GM10248 (cell line): ENCODE measurements at regions of chr1 and their contacts with region 1.

Region 1: GRCh38 chr1:58515794-58516401 is 30.6 kb downstream of the OMA1 start:
- DNase-seq: peak; percentile 40
- CTCF ChIP-seq: peak; percentile 64

Region 2: GRCh38 chr1:58308206-58308605 is 207.7 kb before region 1 on chr1:
- CTCF ChIA-PET with region 1: no interaction called
- POLR2A ChIA-PET with region 1: no interaction called
- DNase-seq: no peak
- CTCF ChIP-seq: no peak

Region 3: GRCh38 chr1:58528518-58528917 is 12.6 kb after region 1 on chr1:
- CTCF ChIA-PET with region 1: interaction called, 22 read pairs
- POLR2A ChIA-PET with region 1: no interaction called
- DNase-seq: no peak
- CTCF ChIP-seq: no peak

Region 4: GRCh38 chr1:58659516-58659915 is 143.6 kb after region 1 on chr1:
- CTCF ChIA-PET with region 1: interaction called, 122 read pairs
- POLR2A ChIA-PET with region 1: no interaction called
- DNase-seq: no peak
- CTCF ChIP-seq: no peak